RWPE1 (cell line): ENCODE measurements at regions of chr2 and their contacts with region 1.

Region 1: GRCh38 chr2:172555522-172556283 is at the start of gene PDK1:
- DNase-seq: peak; percentile 92
- H3K27ac ChIP-seq: peak within 1 kb of the TSS; percentile 97
- CTCF ChIP-seq: no peak

Region 2: GRCh38 chr2:172137109-172137508 is 418.6 kb before region 1 on chr2:
- CTCF ChIA-PET with region 1: no interaction called
- POLR2A ChIA-PET with region 1: interaction called, 10 read pairs
- DNase-seq: peak; percentile 19
- H3K27ac ChIP-seq: no peak overlapping the region
- CTCF ChIP-seq: no peak

Region 3: DNA sequence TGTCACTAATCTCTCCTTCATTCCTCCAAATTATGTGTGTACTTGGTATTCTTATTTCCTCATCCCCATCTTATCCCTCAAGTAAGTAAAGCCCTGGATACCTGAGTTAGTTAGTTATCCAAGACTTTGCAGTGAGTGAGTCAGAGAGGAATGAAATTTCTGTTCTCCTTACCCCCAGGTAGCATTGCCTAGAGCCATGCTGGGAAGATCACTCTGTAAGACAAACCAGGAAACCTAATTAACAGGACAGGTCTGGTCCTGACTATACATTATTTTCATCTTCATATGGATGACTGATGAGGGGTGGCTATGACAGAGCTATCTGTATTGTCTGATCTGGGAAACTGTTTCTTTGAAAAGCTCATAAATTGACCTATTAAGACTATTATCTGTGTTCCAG is 183.3 kb before region 1 on chr2:
- CTCF ChIA-PET with region 1: no interaction called
- POLR2A ChIA-PET with region 1: no interaction called
- DNase-seq: peak; percentile 89
- H3K27ac ChIP-seq: no peak overlapping the region
- CTCF ChIP-seq: no peak

Region 4: DNA sequence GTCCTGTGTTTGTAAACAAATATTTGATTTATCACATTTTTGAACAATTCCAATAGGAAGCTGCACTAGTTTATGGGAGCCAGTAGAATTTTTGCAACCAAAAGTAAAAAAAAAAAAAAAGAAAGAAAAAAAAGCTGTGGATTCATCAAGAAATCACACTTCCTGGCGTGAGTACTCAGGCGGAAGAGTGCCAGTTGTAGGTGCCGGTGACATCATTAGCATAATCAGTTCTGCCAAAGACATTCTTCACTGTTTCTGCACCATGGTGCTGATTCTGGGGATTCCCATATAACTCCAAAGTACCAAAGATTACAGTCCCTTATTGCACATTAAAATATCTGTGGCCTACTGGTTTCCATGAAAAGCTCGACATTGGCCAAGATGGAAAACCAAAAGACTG is 212.7 kb after region 1 on chr2:
- CTCF ChIA-PET with region 1: interaction called, 11 read pairs
- POLR2A ChIA-PET with region 1: no interaction called
- DNase-seq: no peak
- H3K27ac ChIP-seq: no peak overlapping the region
- CTCF ChIP-seq: no peak